ENCODE measurements at regions of chr5 and their contacts with region 1.

Region 1: GRCh38 chr5:145237843-145238242 is 597.3 kb downstream of the PRELID2 start:
- DNase-seq: no peak
- H3K4me3 Mint-ChIP-seq: no peak overlapping the region
- H3K27ac Mint-ChIP-seq: no peak overlapping the region
- H3K4me1 Mint-ChIP-seq: no peaks in the 10 kb centered on the region
- H3K27me3 Mint-ChIP-seq: no peaks in the 10 kb centered on the region

Region 2: DNA sequence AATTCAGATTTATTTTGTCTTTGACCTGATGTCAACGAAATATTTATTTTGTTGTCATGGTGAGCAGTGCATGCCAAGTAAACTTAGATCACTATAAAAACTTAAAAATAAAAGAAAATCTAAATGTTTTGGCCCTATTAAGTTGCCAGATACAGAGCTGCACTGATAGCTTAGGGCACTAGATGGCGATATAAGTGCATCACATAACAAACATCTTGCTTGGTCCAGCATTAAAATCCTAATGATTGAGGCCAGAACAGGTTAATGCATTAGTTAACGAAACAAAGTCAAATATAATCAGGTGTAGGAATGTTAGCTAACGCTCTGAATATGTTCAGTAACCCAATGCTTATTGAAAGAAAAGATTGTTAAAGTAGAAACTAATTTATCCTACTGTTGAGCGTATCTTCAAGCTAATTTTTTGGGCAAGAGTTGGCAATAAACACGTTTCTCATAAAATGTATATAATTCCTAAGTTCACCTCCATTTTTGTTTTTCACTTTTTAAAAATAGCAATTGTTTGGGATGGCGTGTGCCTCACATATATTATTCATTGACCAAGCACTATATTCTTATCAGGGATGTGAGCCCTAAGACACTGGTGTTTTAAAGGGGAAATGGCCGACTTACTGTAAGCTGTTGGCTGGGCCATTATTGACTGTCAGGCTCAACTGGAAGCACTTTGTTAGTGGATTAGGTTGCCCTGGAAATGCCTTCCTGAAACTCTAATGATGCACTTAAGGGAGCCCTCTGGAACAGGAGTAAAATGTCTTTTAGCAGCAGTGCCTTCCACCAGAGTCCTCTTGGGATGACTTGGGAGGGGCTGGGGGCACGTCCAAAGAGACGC is 1033.9 kb before region 1 on chr5:
- intact Hi-C with region 1: loop called (anchors 5 kb)
- DNase-seq: no peak
- H3K4me3 Mint-ChIP-seq: no peak overlapping the region
- H3K27ac Mint-ChIP-seq: no peak overlapping the region
- H3K4me1 Mint-ChIP-seq: peaks cover 5% of the 10 kb centered on the region
- H3K27me3 Mint-ChIP-seq: peaks cover 55% of the 10 kb centered on the region

Measured in activated T-helper 2 cell treated with anti-CD3 and anti-CD28 coated beads, Interferon-gamma antibody, Interleukin-2, Interleukin-4, amounts not matched to agents 10 μg/mL and 5 μg/mL and 100 μg/mL, durations not matched to agents 14 hours and 24 hours and 36 hours (primary cell).